ENCODE measurements at regions of chr7 and their contacts with region 1.

Region 1: DNA sequence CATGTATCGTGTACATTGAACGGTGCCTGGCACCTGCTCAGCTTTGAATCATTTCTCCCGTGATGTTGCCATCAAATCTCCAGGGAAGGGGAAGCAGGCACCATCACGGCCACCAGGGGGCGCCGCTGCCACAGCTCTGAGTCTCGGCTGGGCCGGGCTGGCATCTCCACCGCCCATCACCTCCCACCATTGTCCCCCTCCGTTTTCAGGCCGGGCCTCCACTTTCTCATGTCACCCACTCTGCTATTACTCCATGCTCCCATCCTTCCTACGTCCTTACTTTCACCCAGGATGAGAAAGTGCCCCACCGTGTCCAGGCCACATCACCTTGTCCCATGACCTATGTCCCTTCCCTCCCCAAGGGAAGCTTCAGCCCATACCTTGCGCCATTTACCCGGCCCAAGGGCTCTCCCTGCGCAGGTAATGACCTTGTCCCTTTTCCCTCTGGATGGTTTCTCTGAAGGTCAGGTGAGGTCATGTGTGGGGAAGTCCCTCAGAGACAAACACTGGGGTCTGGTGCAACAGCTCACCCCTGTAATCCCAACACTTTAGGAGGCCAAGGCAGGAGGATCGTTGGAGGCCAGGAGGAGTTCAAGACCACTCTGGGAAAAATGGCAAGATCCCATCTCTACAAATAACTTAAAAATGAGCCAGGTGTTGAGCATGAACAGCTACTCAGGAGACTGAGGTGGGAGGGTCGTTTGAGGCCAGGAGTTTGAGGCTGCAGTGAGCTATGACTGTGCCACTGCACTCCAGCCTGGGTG is 31.8 kb upstream of the OCM2 start:
- DNase-seq: peak; percentile 83
- H3K4me3 ChIP-seq: no peak overlapping the region
- H3K27ac ChIP-seq: no peak overlapping the region
- H3K4me1 ChIP-seq: peaks cover 0 to 3% (median 0%) of the 10 kb centered on the region in 4 donors
- H3K27me3 ChIP-seq: no peaks in the 10 kb centered on the region
- CTCF ChIP-seq: peak; percentile 88 to 95 (median 92)
- EP300 ChIP-seq: no peak
- POLR2A ChIP-seq: no peak

Region 2: DNA sequence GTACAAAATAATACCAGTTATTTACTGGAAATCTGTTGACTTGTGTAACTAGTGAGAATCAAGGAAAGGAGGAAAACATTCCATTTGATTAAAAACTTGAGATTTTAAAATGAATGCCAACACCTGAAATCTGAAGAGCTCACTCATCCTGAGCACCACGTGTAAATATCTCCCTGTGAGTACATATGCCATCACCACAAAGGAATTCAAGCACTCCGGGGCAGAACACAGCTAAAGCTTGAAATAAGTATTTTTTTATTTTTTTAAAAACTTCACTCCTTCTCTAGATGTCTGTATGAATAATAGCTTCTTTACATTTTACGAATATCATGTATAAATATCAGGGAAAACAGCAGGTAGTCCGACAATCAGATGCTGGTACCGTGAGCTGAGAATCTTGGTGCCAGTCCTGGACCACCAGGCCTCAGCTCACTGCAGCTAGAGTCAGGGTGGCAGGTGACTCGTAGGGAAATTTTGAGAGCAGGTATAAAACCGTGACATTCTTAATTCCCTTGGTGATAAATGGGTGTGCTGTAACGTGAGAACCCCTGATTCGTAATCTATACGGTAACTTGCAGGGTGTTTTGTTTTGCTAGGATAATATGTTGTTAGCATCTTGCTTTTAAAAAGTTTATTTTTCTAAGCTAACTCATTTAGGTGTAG is 97.6 kb after region 1 on chr7:
- in situ Hi-C with region 1: no loop called
- intact Hi-C with region 1: no loop called
- DNase-seq: no peak
- H3K4me3 ChIP-seq: no peak overlapping the region
- H3K27ac ChIP-seq: no peak overlapping the region
- H3K4me1 ChIP-seq: peaks cover 0 to 9% (median 0%) of the 10 kb centered on the region in 4 donors
- H3K27me3 ChIP-seq: no peaks in the 10 kb centered on the region
- CTCF ChIP-seq: no peak
- EP300 ChIP-seq: no peak
- POLR2A ChIP-seq: no peak

Region 3: GRCh38 chr7:98168181-98168905 is 146.6 kb after region 1 on chr7:
- in situ Hi-C with region 1: loop called (anchors 5 to 25 kb)
- intact Hi-C with region 1: loop called (anchors 5 kb)
- DNase-seq: peak; percentile 76
- H3K4me3 ChIP-seq: no peak overlapping the region
- H3K27ac ChIP-seq: no peak overlapping the region
- H3K4me1 ChIP-seq: peaks cover 0 to 31% (median 11%) of the 10 kb centered on the region in 4 donors
- H3K27me3 ChIP-seq: no peaks in the 10 kb centered on the region
- CTCF ChIP-seq: peak; percentile 82 to 88 (median 87)
- EP300 ChIP-seq: no peak
- POLR2A ChIP-seq: no peak

Region 4: GRCh38 chr7:98174334-98175259 is 152.8 kb after region 1 on chr7:
- in situ Hi-C with region 1: loop called in 3 of 4 experiments (anchors 5 to 25 kb)
- intact Hi-C with region 1: loop called (anchors 5 kb)
- DNase-seq: no peak
- H3K4me3 ChIP-seq: no peak overlapping the region
- H3K27ac ChIP-seq: no peak overlapping the region
- H3K4me1 ChIP-seq: no peaks in the 10 kb centered on the region
- H3K27me3 ChIP-seq: no peaks in the 10 kb centered on the region
- CTCF ChIP-seq: no peak
- EP300 ChIP-seq: no peak
- POLR2A ChIP-seq: no peak